Activated naive CD4-positive, alpha-beta T cell treated with anti-CD3 and anti-CD28 coated beads, Interleukin-2, amount 10 ng/mL, durations not matched to agents 7 days and 5 days (primary cell): ENCODE measurements at regions of chr13 and their contacts with region 1.

Region 1: GRCh38 chr13:46552889-46553510 is at the start of gene LRCH1:
- DNase-seq: peak; percentile 93
- H3K4me3 Mint-ChIP-seq: peak within 1 kb of the TSS; percentile 92
- H3K27ac Mint-ChIP-seq: peak within 1 kb of the TSS; percentile 83
- H3K4me1 Mint-ChIP-seq: peaks cover 51% of the 10 kb centered on the region
- H3K27me3 Mint-ChIP-seq: peaks cover 14% of the 10 kb centered on the region

Region 2: GRCh38 chr13:46577696-46578589 is 24.9 kb after region 1 on chr13:
- CTCF ChIA-PET with region 1: interaction called, 12 read pairs
- DNase-seq: no peak
- H3K4me3 Mint-ChIP-seq: no peak overlapping the region
- H3K27ac Mint-ChIP-seq: no peak overlapping the region
- H3K4me1 Mint-ChIP-seq: peaks cover 45% of the 10 kb centered on the region
- H3K27me3 Mint-ChIP-seq: no peaks in the 10 kb centered on the region

Region 3: GRCh38 chr13:46668302-46668720 is 115.3 kb after region 1 on chr13:
- CTCF ChIA-PET with region 1: interaction called, 14 read pairs
- DNase-seq: no peak
- H3K4me3 Mint-ChIP-seq: peak overlapping the region; percentile 79
- H3K27ac Mint-ChIP-seq: peak overlapping the region; percentile 89
- H3K4me1 Mint-ChIP-seq: peaks cover 48% of the 10 kb centered on the region
- H3K27me3 Mint-ChIP-seq: no peaks in the 10 kb centered on the region

Region 4: DNA sequence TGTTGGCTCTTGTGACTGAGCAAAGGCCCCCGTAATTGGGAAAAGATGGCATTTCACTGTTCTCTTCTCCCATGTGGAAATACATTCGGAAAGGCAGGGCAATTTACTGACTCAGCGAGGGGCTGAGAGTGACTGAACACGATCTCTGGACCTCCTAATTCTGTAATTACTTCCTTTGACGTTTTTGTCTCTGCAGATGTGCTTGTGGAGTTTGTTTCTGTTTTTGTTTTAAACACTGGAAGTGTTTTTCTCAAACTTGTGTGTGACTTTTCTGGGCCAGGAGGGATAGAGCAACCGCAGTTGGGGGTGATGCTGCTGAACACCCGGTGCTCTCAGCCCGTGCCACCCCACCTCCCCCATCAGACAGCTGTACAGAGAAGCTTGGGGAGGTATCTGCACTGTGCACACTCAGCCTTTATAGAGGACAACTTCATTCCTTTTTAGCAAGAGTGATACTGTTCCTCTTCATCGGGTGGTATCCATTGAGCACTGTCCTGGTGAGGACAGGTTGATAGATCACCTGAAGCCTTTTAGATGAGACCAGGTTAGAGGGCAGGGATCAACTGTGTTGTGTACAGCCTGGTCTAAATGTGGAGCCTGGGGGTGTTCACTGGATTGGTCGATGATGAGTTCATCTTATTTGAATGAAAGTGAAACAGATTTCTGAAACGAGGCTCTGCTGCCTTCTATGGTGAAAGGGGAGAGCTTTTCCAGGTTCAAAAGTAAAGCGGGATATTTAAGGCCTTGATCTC is 126.5 kb after region 1 on chr13:
- CTCF ChIA-PET with region 1: interaction called, 26 read pairs
- DNase-seq: peak; percentile 70
- H3K4me3 Mint-ChIP-seq: no peak overlapping the region
- H3K27ac Mint-ChIP-seq: no peak overlapping the region
- H3K4me1 Mint-ChIP-seq: peaks cover 22% of the 10 kb centered on the region
- H3K27me3 Mint-ChIP-seq: no peaks in the 10 kb centered on the region

Region 5: DNA sequence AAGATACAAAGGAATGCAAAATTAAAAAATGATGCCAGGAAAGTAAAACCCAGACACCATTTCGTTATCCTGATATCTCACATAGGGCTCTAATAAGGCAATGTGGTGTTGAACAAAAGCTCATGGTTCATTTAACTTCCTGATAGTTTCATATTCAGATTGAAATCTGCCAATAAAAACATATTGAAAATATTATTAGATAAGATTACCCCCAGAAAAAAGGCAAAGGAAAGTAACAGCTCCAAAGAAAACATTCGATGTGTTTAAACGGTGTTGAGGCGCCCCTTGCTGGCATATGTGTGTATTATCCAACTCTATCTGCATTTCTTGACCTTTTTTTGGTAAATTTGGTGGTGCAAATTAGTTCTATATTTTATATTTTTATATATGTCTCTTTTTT is 168.1 kb after region 1 on chr13:
- CTCF ChIA-PET with region 1: interaction called, 51 read pairs
- DNase-seq: peak; percentile 65
- H3K4me3 Mint-ChIP-seq: no peak overlapping the region
- H3K27ac Mint-ChIP-seq: no peak overlapping the region
- H3K4me1 Mint-ChIP-seq: peaks cover 1% of the 10 kb centered on the region
- H3K27me3 Mint-ChIP-seq: no peaks in the 10 kb centered on the region

Region 6: GRCh38 chr13:46751811-46752635 is 199.0 kb after region 1 on chr13:
- CTCF ChIA-PET with region 1: interaction called, 15 read pairs
- DNase-seq: peak; percentile 69
- H3K4me3 Mint-ChIP-seq: peak overlapping the region; percentile 3
- H3K27ac Mint-ChIP-seq: peak overlapping the region; percentile 85
- H3K4me1 Mint-ChIP-seq: peaks cover 36% of the 10 kb centered on the region
- H3K27me3 Mint-ChIP-seq: no peaks in the 10 kb centered on the region

Region 7: DNA sequence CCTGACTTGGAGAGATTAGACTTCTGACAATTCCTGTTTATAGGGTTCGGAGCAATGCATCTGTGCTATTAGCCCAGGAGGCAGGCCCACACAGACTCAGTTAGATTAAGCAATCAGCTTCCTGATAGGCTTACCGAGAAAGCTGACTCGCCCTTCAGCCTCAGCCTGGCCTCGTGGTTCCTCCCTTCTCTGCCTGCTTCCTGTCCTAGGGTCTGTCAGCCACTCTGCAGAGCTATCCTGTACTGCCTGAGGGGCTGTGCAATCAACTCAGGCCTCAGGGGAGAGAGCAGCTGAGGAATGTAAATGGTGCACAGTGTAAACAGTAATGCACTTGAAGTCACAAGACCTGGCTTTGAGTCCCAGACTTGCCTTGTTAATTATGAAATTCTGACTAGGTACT is 313.1 kb after region 1 on chr13:
- CTCF ChIA-PET with region 1: no interaction called
- DNase-seq: no peak
- H3K4me3 Mint-ChIP-seq: no peak overlapping the region
- H3K27ac Mint-ChIP-seq: no peak overlapping the region
- H3K4me1 Mint-ChIP-seq: no peaks in the 10 kb centered on the region
- H3K27me3 Mint-ChIP-seq: peaks cover 4% of the 10 kb centered on the region